Left colon (tissue), 2 donors: ENCODE measurements at regions of chr3 and their contacts with region 1.

Region 1: DNA sequence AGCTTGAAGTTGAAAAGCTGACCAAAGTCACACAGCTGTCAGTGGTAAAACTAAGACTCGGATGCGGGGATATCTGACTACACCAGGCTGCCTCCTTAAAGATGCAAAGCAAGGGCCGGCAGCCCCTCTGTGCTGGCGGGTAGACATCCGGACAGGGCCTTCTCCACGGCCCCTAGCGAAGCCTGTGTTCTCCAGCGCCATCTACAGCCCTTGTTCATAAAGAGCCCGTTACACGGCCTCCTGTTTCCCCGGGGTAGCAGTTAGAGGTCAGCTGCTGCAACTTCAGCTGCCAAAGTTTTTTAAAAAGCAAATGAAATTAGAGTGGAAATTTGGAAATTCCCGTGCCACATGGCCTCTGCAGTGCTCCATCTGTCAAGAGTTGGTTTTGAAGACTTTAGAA is 383.0 kb downstream of the TBL1XR1 start:
- DNase-seq: peak; percentile 37 to 61
- ATAC-seq: peak; percentile 88

Region 2: DNA sequence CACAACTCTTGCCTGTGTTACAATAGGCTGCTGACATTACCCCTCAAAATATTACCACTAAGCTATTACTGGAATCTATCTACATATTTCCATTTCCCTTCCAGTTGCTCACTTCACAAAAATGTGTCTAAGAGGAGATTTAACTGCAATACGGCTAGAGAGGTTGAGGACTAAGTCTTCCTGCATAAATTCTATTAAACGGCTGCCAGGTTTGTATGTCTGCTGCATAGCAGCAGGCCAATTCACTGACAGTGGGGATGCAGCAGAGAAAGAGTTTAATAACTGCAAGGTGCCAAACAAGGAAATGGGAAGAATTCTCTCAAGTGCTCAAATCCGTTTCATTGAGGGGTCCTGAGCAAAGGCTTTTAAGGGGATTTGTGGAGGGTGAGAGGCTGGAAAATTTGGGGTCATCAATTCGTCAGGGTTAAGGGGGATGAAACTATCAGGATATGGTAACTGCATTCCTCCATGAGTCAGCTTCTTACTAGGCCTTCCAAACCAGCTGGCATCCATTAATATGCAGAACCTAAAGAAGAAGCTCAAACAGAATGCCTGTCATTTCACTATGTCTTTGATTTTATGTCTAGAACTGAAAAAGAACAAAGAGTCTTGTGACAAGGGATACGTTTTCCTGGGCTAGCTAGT is 292.6 kb before region 1 on chr3:
- intact Hi-C with region 1: loop called in 1 of 2 experiments (anchors 10 kb)
- DNase-seq: no peak
- ATAC-seq: no peak

Region 3: GRCh38 chr3:177263615-177264368 is 449.5 kb after region 1 on chr3:
- intact Hi-C with region 1: no loop called
- DNase-seq: no peak
- ATAC-seq: no peak